ENCODE measurements at regions of chr1 and their contacts with region 1.

Region 1: DNA sequence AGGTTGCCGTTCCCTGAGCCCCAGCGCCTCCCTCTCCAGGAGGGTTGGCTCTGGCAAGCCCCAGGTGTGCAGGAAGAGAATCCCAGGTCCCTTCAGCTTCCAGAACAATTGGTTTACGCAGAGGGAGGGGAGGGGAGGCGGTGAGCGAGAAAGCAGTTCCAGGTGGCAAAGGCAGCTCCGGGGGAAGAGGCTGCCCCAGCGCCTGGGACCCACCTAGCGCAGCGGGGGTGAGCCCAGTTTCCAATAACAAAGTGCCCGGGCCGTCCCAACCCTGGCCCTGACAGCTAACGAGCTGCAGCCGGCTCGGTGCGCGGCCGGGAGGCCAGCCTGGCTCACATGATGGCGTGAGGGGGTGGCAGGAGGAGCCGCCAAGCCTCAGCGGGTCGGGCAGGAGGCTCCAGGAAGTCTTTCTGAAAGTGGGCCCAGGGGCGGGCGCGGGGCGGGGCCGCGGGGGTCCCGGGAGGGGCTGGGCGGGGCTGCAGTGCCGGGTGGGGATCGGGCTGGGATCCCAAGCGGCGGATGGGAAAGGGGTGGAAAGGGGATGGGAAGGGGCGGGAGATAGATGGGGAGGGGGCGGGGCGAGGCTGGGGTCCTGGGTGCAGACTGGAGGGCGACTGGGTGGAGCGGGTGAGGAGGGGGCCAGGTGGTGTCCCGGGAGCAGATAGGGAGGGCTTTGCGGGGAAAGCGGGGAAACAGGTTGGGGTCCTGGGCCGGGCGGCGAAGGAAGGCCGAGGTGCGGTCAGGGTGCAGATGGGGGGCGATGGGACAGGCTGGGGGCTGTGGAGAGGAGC is 22.8 kb downstream of the DHRS3 start:
- DNase-seq: peak; percentile 80 to 81
- ATAC-seq: peak in 2 of 4 donors; percentile 11 to 13
- H3K4me3 ChIP-seq: peak overlapping the region; percentile 63
- H3K27ac ChIP-seq: peak overlapping the region; percentile 93
- H3K4me1 ChIP-seq: peaks cover 85% of the 10 kb centered on the region
- H3K27me3 ChIP-seq: no peaks in the 10 kb centered on the region
- CTCF ChIP-seq: no peak

Region 2: GRCh38 chr1:12477936-12478611 is 117.1 kb before region 1 on chr1:
- intact Hi-C with region 1: loop called in 1 of 2 experiments (anchors 5 kb)
- DNase-seq: peak; percentile 81 to 88
- ATAC-seq: peak; percentile 39 to 57 (median 53)
- H3K4me3 ChIP-seq: peak overlapping the region; percentile 21
- H3K27ac ChIP-seq: peak overlapping the region; percentile 79
- H3K4me1 ChIP-seq: peaks cover 87% of the 10 kb centered on the region
- H3K27me3 ChIP-seq: no peaks in the 10 kb centered on the region
- CTCF ChIP-seq: no peak

Region 3: GRCh38 chr1:12549460-12550349 is 45.5 kb before region 1 on chr1:
- intact Hi-C with region 1: loop called in 1 of 2 experiments (anchors 5 kb)
- DNase-seq: peak; percentile 90 to 95
- ATAC-seq: peak; percentile 65 to 76 (median 74)
- H3K4me3 ChIP-seq: peak overlapping the region; percentile 18
- H3K27ac ChIP-seq: peak overlapping the region; percentile 84
- H3K4me1 ChIP-seq: peaks cover 52% of the 10 kb centered on the region
- H3K27me3 ChIP-seq: no peaks in the 10 kb centered on the region
- CTCF ChIP-seq: no peak